Sigmoid colon (tissue), 7 donors: ENCODE measurements at regions of chr10 and their contacts with region 1.

Region 1: GRCh38 chr10:127906548-127907377 is at the start of gene PTPRE:
- DNase-seq: peak; percentile 79
- H3K4me3 ChIP-seq: peak within 1 kb of the TSS; percentile 30 to 73 (median 64)
- H3K27ac ChIP-seq: peak within 1 kb of the TSS; percentile 75 to 84 (median 79)
- H3K4me1 ChIP-seq: peaks cover 0 to 19% (median 13%) of the 10 kb centered on the region in 4 donors
- H3K27me3 ChIP-seq: peaks cover 0 to 22% (median 7%) of the 10 kb centered on the region in 3 donors
- CTCF ChIP-seq: peak in 3 of 4 experiments; percentile 39 to 72 (median 52)
- EP300 ChIP-seq: no peak
- POLR2A ChIP-seq: peak in 1 of 2 donors; percentile 11
- total RNA-seq, gene PTPRE: 10.7 to 17.9 (median 13.8) TPM

Region 2: GRCh38 chr10:128011175-128011979 is 104.6 kb after region 1 on chr10:
- intact Hi-C with region 1: loop called (anchors 1 kb)
- DNase-seq: peak; percentile 86
- H3K4me3 ChIP-seq: no peak overlapping the region
- H3K27ac ChIP-seq: peak overlapping the region in 1 of 4 donors; percentile 24
- H3K4me1 ChIP-seq: peaks cover 0 to 4% (median 2%) of the 10 kb centered on the region in 4 donors
- H3K27me3 ChIP-seq: no peaks in the 10 kb centered on the region
- CTCF ChIP-seq: peak; percentile 66 to 96 (median 92)
- EP300 ChIP-seq: no peak
- POLR2A ChIP-seq: no peak

Region 3: GRCh38 chr10:128069351-128070051 is 162.7 kb after region 1 on chr10:
- intact Hi-C with region 1: loop called (anchors 2 kb)
- DNase-seq: peak; percentile 80
- H3K4me3 ChIP-seq: no peak overlapping the region
- H3K27ac ChIP-seq: no peak overlapping the region
- H3K4me1 ChIP-seq: peaks cover 0 to 11% (median 3%) of the 10 kb centered on the region in 4 donors
- H3K27me3 ChIP-seq: no peaks in the 10 kb centered on the region
- CTCF ChIP-seq: peak; percentile 46 to 79 (median 68)
- EP300 ChIP-seq: no peak
- POLR2A ChIP-seq: no peak